ENCODE measurements at regions of chr1 and their contacts with region 1.

Region 1: DNA sequence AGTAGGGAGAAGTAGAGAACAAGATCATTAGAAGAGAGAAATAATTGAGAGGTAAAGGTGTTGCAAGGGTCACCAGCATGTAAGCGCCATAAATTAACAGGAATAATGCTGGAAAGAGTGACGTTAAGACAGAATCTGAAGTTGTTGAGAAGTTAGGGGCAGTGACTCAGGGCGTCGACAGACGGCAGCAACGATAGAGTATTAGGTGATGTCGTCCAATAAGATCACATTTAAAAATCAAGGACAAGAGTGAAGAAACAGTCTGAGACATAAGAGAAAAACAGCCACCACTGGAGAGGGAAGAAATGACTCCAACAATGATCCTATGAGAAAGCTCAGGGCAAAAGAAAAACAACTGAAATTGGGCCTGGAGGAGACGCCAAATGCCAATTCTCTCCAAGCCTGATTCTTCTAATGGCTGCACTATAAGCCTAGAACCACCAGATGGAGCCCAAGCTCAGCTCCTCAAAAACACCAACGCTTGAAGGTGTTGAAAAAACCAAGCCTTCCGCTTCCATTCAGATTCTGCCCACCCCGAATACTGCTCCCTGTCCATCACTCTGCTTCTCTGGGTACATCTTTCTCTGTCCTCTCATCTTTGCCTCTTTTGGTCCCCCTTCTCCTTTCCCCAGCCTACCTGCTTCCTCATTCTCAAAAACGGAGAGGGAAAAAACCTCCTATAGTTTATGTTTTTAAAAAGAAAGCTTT is 70.0 kb downstream of the LUZP1 start:
- DNase-seq: peak; percentile 76
- H3K4me3 Mint-ChIP-seq: no peak overlapping the region
- H3K27ac Mint-ChIP-seq: no peak overlapping the region
- H3K4me1 Mint-ChIP-seq: peaks cover 43% of the 10 kb centered on the region
- H3K27me3 Mint-ChIP-seq: no peaks in the 10 kb centered on the region

Region 2: DNA sequence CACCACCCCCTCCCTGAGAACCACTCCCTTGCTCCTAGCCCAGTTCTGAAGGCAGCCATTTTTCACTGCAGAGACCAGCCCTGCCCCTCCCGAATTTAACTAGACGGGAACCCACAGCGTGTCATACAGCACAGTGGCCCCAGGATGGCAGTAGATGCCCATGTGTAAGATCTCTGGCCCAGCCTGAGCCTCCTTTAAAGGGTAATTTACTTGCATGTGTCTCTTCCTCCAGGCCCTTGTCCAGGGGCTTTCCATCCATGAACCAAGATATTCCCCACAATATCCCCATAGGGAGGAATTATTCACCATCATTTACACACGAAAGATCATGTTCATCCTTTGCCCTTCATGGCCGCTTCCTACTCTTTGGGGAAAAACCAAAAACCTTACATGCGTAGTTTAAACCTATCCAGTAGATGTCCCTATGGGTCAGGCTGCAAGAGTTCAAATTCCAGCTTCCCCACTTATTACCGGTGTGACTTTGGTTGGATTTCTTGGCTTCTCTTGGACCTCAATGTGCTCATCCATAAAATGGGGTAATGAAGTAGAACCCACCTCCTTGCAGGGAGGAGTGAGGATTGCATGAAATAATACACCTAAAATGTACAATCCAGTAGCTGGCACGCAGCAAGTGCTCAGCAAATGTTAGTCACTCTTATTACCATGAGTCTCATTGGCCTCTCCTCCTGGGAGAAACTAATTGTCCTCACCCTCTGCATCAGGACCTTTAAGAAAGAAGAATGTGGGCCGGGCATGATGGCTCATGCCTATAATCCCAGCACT is 122.0 kb before region 1 on chr1:
- CTCF ChIA-PET with region 1: interaction called, 3 read pairs
- intact Hi-C with region 1: loop called (anchors 2 kb)
- DNase-seq: peak; percentile 76
- H3K4me3 Mint-ChIP-seq: no peak overlapping the region
- H3K27ac Mint-ChIP-seq: no peak overlapping the region
- H3K4me1 Mint-ChIP-seq: no peaks in the 10 kb centered on the region
- H3K27me3 Mint-ChIP-seq: peaks cover 11% of the 10 kb centered on the region

Region 3: GRCh38 chr1:23132033-23132432 is 33.4 kb after region 1 on chr1:
- CTCF ChIA-PET with region 1: interaction called, 13 read pairs
- intact Hi-C with region 1: no loop called
- DNase-seq: no peak
- H3K4me3 Mint-ChIP-seq: no peak overlapping the region
- H3K27ac Mint-ChIP-seq: no peak overlapping the region
- H3K4me1 Mint-ChIP-seq: peaks cover 7% of the 10 kb centered on the region
- H3K27me3 Mint-ChIP-seq: no peaks in the 10 kb centered on the region

Region 4: DNA sequence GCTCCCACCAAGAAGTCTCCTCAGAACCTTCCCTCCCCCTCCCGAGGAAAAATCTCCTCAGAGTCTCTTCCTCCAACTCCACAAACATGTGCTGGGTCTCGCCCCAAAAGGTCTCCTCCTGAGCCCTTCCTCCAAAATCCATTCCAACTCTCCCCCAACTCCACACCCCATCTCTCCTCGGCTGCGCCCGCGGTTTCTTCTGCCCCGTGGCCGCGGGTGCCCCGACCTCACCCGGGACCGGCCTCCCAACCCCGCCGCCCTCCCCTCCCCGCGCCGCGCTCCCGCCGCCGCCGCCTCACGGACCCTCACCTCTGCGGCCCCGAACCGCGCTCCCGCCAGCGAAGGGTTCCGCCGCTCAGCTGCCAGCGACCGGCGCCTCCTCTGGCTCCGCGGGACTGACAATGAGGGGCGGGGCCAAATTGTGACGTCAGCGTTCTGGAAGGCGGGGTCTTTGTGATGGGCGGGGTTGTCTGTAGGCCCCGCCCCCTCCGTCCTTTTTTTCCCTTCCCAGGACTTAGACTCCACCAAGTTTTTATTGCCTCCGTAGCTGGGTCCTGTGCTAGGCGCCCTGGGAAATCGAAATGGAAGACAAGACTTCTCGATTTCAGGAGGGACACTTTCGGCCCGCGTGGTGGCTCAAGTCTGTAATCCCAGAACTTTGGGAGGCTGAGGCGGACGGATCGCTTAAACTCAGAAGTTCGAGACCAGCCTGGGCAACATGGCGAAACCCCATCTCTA is 70.0 kb after region 1 on chr1 and contains the start of gene LUZP1:
- CTCF ChIA-PET with region 1: interaction called, 57 read pairs
- intact Hi-C with region 1: loop called (anchors 2 kb)
- DNase-seq: peak; percentile 93
- H3K4me3 Mint-ChIP-seq: peak within 1 kb of the TSS; percentile 98
- H3K27ac Mint-ChIP-seq: peak within 1 kb of the TSS; percentile 84
- H3K4me1 Mint-ChIP-seq: peaks cover 28% of the 10 kb centered on the region
- H3K27me3 Mint-ChIP-seq: no peaks in the 10 kb centered on the region
- total RNA-seq, gene LUZP1: 12.6 to 13.7 TPM

Region 5: GRCh38 chr1:23344111-23344986 is 245.7 kb after region 1 on chr1 and contains the start of gene HNRNPR:
- CTCF ChIA-PET with region 1: no interaction called
- intact Hi-C with region 1: loop called (anchors 5 kb)
- DNase-seq: peak; percentile 100
- H3K4me3 Mint-ChIP-seq: peak within 1 kb of the TSS; percentile 83
- H3K27ac Mint-ChIP-seq: peak within 1 kb of the TSS; percentile 93
- H3K4me1 Mint-ChIP-seq: peaks cover 32% of the 10 kb centered on the region
- H3K27me3 Mint-ChIP-seq: no peaks in the 10 kb centered on the region
- total RNA-seq, gene HNRNPR: 203 to 208 TPM

Measured in activated naive CD4-positive, alpha-beta T cell treated with anti-CD3 and anti-CD28 coated beads for 36 hours (primary cell).